ENCODE measurements at regions of chr17 and their contacts with region 1.

Region 1: DNA sequence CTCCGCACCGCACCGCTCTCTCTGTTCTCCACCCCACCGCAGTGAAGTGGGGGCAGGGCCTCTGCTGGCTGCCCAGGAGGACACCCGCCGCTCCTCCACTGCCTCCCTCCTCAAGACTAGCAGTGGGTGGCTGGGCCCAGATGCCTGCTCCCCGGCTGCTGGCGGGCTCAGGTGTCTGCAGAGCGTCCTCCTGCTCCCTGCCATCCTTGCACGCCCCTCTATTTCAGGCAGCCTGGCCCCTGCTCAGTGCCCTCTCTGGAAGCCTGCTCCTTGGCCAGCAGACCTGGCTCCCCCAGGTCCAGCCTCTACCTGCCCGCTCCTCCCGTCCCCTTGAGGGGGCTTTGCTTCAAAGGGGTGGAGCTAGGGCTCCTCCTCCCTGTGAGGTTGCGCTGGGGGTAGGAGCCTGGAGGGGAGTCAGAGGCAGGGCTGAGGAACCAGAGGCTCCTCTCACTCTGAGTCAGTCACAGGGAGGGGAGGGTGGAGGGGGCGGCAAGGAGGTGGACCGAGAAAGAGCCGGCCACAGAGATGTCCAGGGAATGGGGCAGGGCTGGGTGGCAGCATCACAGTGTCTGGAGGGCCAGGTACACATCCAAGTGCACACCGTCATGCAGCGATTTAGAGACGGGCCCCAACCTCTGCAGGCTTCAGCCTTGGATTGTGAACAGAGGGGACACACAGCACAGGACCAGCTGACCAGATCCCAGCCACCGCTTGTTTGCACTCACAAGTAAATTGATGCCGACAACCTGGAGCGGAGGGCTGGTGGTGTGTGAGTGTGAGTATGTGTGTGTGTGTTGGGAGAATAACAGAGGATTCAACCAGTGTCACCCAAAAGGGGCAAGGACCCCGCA is 9.8 kb upstream of the TMEM92 start:
- DNase-seq: no peak
- H3K4me3 ChIP-seq: no peak overlapping the region
- H3K27ac ChIP-seq: no peak overlapping the region
- H3K4me1 ChIP-seq: no peaks in the 10 kb centered on the region
- H3K27me3 ChIP-seq: no peaks in the 10 kb centered on the region
- CTCF ChIP-seq: no peak

Region 2: DNA sequence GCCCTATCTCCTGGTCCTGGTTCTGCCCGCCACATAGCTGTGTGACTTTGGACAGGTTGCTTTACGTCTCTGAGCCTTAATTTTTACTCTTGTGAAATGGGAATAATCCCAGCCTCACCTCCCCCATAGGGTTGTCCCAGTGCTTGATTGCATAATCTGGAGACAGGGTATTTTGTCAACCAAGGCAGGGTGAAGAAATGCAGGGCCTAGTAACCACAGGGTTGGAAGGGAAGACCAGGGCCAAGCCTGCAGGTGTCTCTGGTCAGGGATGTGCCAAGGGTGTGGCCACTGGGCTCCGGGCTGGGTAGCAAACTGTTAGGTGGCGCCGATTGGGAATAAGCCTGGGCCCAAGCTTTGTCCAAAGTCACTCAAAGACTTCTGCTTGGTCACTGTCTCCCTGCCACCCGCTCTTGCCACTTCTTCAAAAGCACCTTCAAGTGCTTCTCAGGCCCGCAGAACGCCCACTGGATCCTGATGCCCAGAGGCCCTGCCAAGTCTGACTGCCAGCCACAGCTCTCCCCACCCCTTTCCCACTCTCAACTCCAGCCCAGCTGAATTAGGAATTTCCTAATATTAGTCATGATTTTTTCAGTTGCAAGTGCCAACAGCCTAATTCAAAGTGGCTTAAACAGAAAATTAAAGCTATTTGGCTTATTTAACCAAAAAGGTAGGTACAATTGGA is 42.5 kb before region 1 on chr17:
- CTCF ChIA-PET with region 1: no interaction called
- POLR2A ChIA-PET with region 1: no interaction called
- intact Hi-C with region 1: loop called (anchors 5 kb)
- DNase-seq: no peak
- H3K4me3 ChIP-seq: no peak overlapping the region
- H3K27ac ChIP-seq: no peak overlapping the region
- H3K4me1 ChIP-seq: peaks cover 26% of the 10 kb centered on the region
- H3K27me3 ChIP-seq: no peaks in the 10 kb centered on the region
- CTCF ChIP-seq: no peak